ENCODE measurements at regions of chr10 and their contacts with region 1.

Region 1: GRCh38 chr10:105793071-105793470 is 1152.0 kb downstream of the SORCS3 start:
- DNase-seq: no peak
- ATAC-seq: no peak
- H3K4me3 ChIP-seq: no peak overlapping the region
- H3K4me3 Mint-ChIP-seq: no peak overlapping the region
- H3K27ac ChIP-seq: no peak overlapping the region
- H3K27ac Mint-ChIP-seq: no peak overlapping the region
- H3K4me1 ChIP-seq: no peaks in the 10 kb centered on the region
- H3K4me1 Mint-ChIP-seq: no peaks in the 10 kb centered on the region
- H3K27me3 ChIP-seq: no peaks in the 10 kb centered on the region
- H3K27me3 Mint-ChIP-seq: no peaks in the 10 kb centered on the region
- CTCF ChIP-seq: no peak

Region 2: GRCh38 chr10:105745596-105746148 is 47.4 kb before region 1 on chr10:
- intact Hi-C with region 1: loop called (anchors 2 kb)
- DNase-seq: no peak
- ATAC-seq: no peak
- H3K4me3 ChIP-seq: no peak overlapping the region
- H3K4me3 Mint-ChIP-seq: no peak overlapping the region
- H3K27ac ChIP-seq: no peak overlapping the region
- H3K27ac Mint-ChIP-seq: no peak overlapping the region
- H3K4me1 ChIP-seq: no peaks in the 10 kb centered on the region
- H3K4me1 Mint-ChIP-seq: no peaks in the 10 kb centered on the region
- H3K27me3 ChIP-seq: no peaks in the 10 kb centered on the region
- H3K27me3 Mint-ChIP-seq: no peaks in the 10 kb centered on the region
- CTCF ChIP-seq: no peak

Measured in natural killer cell (primary cell).